Posterior cingulate gyrus (tissue), 11 donors: ENCODE measurements at regions of chr5 and their contacts with region 1.

Region 1: DNA sequence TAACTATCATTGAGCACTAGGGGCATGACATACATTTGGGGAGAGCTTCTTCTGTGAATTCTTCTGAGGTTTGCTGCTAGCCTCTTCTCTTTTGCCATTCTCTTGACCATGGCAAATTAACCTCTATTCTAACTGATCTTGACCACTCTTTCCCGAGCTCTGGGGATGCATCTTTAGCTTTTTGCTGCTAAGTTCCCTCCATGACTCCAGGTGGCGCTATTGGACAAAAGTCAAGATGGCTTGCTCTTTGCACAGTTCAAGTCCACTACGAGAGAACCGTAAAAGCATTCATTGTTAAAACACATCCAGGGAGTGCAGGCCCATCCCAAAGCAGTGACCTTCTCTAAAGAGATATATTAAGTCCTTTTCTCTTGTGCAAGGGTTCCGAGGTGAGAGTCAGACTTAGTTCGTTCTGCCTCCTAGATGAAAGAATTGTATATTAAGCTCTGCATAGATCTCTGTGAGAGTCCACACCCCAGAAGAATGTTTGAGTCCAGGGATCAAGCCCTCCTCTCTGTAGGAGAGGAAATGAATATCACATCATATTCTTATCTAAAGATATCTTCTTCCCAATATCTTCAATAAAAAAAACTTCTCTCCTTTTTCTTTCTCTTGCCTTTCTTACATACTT is 1152.9 kb upstream of the CDH6 start:
- DNase-seq: peak in 6 of 10 donors; percentile 42 to 88 (median 53)

Region 2: GRCh38 chr5:31186672-31187267 is 1146.2 kb after region 1 on chr5:
- intact Hi-C with region 1: loop called (anchors 2 kb)
- DNase-seq: no peak

Region 3: DNA sequence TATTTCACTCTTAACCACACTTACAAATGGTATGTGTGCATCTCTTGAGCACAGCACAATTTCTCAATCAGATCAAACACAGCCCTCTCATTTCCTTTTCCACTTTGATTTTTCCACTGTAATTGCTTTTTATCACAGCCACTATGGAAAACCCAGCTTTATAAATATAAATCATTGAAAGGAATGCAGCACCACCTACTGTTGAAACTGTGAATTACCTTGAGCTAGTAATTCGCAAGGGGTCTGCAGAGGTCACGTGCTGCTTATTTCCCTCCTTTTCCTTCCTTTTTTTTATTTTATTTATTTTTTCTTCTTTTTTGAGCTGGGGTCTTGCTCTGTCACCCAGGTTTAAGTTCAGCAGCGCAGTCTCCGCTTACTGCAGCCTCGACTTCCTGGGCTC is 1229.8 kb after region 1 on chr5:
- intact Hi-C with region 1: loop called (anchors 2 kb)
- DNase-seq: no peak